Esophagus muscularis mucosa (tissue), 4 donors: ENCODE measurements at regions of chr14 and their contacts with region 1.

Region 1: DNA sequence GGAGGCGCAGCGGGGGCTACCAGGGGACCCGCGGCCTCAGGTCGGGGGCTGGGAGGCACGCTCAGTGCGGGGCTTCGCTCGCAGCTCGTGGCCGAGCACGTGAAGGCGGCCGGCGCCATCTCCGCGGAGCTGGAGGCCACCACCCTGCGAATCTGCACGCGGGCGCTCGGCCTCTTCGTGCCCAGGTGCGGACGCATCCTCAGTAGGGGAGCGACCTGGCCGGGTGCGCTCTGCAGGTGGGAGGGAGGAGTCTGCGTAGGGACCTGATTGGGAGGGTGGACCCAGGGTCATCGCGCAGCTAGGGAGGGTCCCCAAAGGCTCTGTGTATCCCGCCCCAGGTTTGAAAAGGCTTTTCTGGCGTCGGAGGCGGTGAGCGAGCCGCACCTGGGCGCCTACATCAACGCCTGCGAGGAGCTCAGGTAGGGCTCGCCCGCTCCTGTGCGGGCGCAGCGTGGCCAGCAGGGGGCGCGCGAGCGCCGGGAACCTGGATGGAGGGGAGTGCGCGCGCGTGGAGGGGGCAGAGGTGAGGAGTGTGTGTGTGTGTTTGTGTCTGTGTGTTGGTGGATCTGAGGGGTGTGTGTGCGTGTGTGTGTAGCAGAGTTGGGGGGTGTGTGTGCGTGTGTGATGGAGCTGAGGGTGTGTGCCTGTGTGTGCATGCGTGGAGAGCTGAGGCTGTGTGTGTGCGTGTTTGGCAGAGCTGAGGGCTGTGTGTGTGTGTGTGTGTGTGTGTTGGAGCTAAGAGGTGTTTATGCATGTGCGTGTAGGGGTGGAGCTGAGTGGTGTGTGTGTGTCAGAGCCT is 10.3 kb downstream of the EXOC3L4 start:
- DNase-seq: no peak
- H3K4me3 ChIP-seq: peak overlapping the region in 1 of 4 donors; percentile 31
- H3K27ac ChIP-seq: no peak overlapping the region
- H3K4me1 ChIP-seq: peaks cover 28 to 49% (median 47%) of the 10 kb centered on the region in 4 donors
- H3K27me3 ChIP-seq: peaks cover 0 to 71% (median 33%) of the 10 kb centered on the region in 4 donors
- CTCF ChIP-seq: peak; percentile 92 to 100 (median 98)
- EP300 ChIP-seq: no peak
- POLR2A ChIP-seq: no peak

Region 2: DNA sequence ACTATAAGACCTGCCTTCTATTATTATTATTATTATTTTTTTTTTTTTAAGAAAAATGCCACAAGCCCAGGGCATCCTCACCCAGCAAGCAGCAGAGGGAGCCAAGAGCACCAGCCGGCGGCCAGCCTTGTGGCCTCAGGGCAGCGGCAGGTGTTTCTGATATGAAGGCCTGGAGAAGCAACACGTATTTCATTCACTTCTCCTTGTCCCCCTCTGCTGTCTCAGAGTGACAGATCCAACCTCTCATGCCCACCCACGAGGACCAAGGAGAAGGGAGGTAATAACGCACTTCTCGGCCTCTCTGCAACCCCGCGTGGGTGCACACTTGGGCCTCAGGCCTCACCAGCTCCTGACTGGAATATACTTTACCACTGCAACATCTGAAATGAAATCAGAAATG is 72.9 kb before region 1 on chr14:
- intact Hi-C with region 1: no loop called
- DNase-seq: no peak
- H3K4me3 ChIP-seq: no peak overlapping the region
- H3K27ac ChIP-seq: no peak overlapping the region
- H3K4me1 ChIP-seq: peaks cover 7 to 52% (median 43%) of the 10 kb centered on the region in 4 donors
- H3K27me3 ChIP-seq: no peaks in the 10 kb centered on the region
- CTCF ChIP-seq: no peak
- EP300 ChIP-seq: no peak
- POLR2A ChIP-seq: no peak

Region 3: DNA sequence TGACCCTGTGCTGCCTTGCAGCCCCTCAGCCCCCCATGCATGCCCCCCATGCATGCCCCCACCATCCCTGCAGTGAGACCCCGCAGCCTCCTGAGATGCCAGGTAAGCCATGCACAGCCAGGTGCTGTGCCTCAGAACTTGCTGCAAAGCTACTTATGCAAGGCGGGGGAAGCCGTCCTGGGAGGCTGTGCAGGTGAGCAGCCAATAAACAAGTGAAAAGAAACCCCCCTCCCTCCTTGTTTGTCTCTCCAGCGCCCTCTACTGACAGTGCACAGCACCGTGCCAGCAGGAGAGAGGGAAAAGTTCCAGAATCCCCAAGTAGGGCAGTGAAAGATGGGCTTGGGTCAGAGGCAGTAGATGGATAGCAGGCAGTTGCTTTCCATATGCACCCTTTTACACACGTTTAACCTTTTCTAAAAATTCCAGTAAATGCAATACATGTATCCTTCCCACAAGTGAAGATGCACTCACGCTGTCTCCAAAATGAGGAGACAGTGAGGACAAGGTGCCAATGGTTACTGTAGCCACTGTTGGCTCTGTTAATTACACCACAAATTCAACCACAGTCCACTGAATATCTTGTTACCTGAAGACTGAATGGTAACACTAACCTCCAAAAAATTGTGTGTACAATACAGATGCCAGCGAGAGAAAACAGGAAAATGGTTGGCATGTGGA is 36.4 kb after region 1 on chr14:
- intact Hi-C with region 1: loop called (anchors 5 kb)
- DNase-seq: no peak
- H3K4me3 ChIP-seq: no peak overlapping the region
- H3K27ac ChIP-seq: no peak overlapping the region
- H3K4me1 ChIP-seq: peaks cover 11 to 33% (median 24%) of the 10 kb centered on the region in 4 donors
- H3K27me3 ChIP-seq: peaks cover 0 to 58% (median 13%) of the 10 kb centered on the region in 4 donors
- CTCF ChIP-seq: peak; percentile 33 to 61 (median 36)
- EP300 ChIP-seq: no peak
- POLR2A ChIP-seq: no peak

Region 4: GRCh38 chr14:103185051-103185992 is 80.5 kb after region 1 on chr14:
- intact Hi-C with region 1: loop called (anchors 5 kb)
- DNase-seq: no peak
- H3K4me3 ChIP-seq: no peak overlapping the region
- H3K27ac ChIP-seq: no peak overlapping the region
- H3K4me1 ChIP-seq: peaks cover 5 to 23% (median 12%) of the 10 kb centered on the region in 4 donors
- H3K27me3 ChIP-seq: peaks cover 0 to 45% (median 17%) of the 10 kb centered on the region in 4 donors
- CTCF ChIP-seq: peak; percentile 66 to 69 (median 67)
- EP300 ChIP-seq: no peak
- POLR2A ChIP-seq: no peak

Region 5: GRCh38 chr14:103292426-103293374 is 187.8 kb after region 1 on chr14:
- intact Hi-C with region 1: loop called (anchors 2 kb)
- DNase-seq: no peak
- H3K4me3 ChIP-seq: no peak overlapping the region
- H3K27ac ChIP-seq: no peak overlapping the region
- H3K4me1 ChIP-seq: peaks cover 0 to 5% (median 0%) of the 10 kb centered on the region in 4 donors
- H3K27me3 ChIP-seq: peaks cover 0 to 47% (median 0%) of the 10 kb centered on the region in 4 donors
- CTCF ChIP-seq: peak; percentile 89 to 93 (median 91)
- EP300 ChIP-seq: no peak
- POLR2A ChIP-seq: no peak